Dorsolateral prefrontal cortex (tissue), 120 donors: ENCODE measurements at regions of chr2 and their contacts with region 1.

Region 1: GRCh38 chr2:44361330-44362206 is at the starts of genes CAMKMT and PREPL:
- DNase-seq: peak; percentile 92 to 98 (median 96)
- H3K4me3 ChIP-seq: peak within 1 kb of the TSS; percentile 70 to 99 (median 93)
- H3K27ac ChIP-seq: peak within 1 kb of the TSS; percentile 98 to 100 (median 100)
- H3K27me3 ChIP-seq: no peaks in the 10 kb centered on the region
- CTCF ChIP-seq: peak in 12 of 56 donors; percentile 4 to 41 (median 14)
- total RNA-seq, gene CAMKMT: 10.0 to 32.5 (median 15.9) TPM
- total RNA-seq, gene PREPL: 114 to 573 (median 405) TPM

Region 2: DNA sequence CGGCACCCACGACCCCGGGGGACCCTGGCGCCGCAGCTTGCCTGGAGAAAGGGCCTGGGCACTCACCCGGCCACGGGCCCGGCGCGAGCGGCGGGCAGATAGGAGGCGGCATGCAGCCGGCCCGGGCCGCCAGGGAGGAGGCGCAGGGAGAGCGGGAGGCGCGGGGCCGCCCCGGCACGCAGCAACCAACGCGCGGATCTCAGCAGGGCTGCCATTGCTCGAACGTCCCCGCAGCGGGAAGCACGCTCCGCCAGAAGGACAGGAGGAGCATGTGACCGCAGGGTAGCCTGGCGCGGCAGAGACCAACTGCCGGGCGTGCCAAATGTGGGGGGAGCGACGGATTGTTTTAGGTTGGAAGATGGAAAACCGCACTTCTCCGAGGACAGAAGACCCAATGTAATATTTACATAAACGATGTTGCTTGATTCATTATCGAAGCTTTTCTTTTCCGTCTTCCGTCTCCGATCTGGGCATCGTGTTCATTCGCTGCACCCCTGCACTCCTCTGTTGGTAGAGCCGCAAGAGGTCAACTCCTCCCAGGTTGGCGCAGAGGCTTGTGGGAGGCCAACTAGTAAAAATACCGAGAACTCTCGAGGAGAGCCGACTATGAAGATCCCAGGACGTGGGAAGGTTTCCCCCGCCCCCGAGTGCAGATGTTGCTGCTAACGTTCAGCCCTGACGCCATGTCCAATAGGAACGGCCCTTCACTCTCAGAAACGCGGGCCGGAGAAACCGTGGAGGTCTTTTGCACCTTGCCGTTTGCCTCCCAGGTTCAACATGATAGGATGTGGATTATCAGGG is 365.6 kb before region 1 on chr2 and contains the start of gene LRPPRC:
- intact Hi-C with region 1: loop called (anchors 2 to 5 kb)
- DNase-seq: peak; percentile 88 to 97 (median 95)
- H3K4me3 ChIP-seq: peak within 1 kb of the TSS; percentile 56 to 100 (median 99)
- H3K27ac ChIP-seq: peak within 1 kb of the TSS; percentile 59 to 96 (median 90)
- H3K27me3 ChIP-seq: no peaks in the 10 kb centered on the region
- CTCF ChIP-seq: peak in 15 of 56 donors; percentile 7 to 28 (median 12)
- total RNA-seq, gene LRPPRC: 53.4 to 119 (median 92.9) TPM

Region 3: DNA sequence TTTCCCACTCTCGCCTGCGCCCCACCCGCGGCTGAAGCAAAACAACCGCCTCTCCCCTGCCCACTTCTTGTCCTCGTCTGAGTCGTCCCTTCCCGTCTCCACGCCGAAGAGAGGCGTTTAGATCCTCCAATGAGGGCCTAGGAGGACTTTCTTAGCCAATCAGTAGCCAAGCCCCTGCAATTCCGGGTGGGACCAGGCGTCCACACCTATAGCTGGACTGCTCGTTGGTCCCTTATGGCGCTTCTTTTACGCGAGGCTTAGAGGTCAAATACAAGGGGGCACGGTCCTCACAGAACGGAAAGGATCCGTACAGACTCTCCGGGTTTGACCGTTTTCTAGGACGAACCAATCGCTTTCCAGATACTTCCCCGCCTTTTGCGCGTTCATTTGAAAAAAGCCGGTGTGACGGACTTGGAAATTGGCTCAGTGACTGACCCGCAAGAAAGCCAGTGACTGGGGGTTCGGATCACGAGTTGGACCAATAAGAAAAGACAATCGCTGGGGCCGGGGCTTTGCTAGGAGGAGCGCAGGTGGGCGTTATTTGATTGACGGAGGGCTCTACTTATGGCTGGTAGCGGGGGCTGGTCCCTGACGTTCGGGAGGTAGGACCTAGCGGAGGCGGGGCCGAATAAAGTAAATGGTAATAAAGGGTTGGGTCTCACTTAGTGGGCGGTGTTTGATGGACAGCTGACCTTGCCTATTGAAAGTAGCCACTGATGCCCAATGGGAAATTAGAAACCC is 193.5 kb before region 1 on chr2:
- intact Hi-C with region 1: loop called (anchors 5 to 10 kb)
- DNase-seq: peak; percentile 92 to 100 (median 100)
- H3K4me3 ChIP-seq: peak overlapping the region; percentile 48 to 100 (median 73)
- H3K27ac ChIP-seq: peak overlapping the region; percentile 86 to 100 (median 99)
- H3K27me3 ChIP-seq: no peaks in the 10 kb centered on the region
- CTCF ChIP-seq: peak in 12 of 56 donors; percentile 4 to 37 (median 14)